Pancreas (tissue), 10 donors: ENCODE measurements at regions of chr11 and their contacts with region 1.

Region 1: DNA sequence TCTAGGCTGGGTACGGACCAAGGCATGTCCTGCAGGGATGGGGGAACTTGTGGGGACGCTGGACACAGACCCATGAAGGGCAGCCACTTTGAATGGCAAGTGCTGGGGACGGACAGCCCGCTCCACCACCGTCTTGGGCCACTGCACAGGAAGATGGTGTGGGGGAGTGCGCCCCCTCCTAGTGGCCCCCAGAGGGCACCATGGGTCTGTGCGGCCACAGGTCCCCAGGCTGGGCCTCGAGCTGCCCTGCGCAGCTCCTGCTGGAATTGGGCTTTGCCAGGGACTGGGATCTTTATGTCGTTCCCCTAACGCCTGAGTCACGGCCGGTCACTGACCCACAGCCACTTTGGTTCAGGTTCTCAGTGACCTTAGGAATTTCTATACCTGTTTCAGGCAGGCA is 44.4 kb downstream of the NAT10 start:
- DNase-seq: no peak
- ATAC-seq: peak in 2 of 4 donors; percentile 46 to 50
- H3K4me3 ChIP-seq: no peak overlapping the region
- H3K27ac ChIP-seq: no peak overlapping the region
- H3K4me1 ChIP-seq: no peaks in the 10 kb centered on the region
- H3K27me3 ChIP-seq: no peaks in the 10 kb centered on the region
- CTCF ChIP-seq: no peak

Region 2: DNA sequence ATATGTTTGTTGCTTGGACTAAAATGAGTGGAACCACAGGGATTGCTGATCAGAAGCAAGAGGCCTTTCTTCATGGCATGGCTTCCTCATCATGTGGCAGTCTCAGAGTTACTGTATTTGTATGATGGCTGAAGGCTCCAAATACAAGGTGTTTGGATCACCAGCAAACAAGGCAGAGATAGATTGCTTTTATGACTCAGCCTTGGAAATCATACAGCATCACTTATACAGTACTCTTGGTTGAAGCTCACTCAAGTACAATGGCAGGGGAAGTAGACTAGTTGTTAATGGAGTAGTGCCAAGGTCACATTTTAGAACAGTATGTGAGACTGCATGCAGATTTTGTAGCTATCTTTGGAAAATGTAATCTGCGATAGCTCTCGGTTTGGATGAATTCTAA is 81.7 kb before region 1 on chr11:
- intact Hi-C with region 1: no loop called
- DNase-seq: no peak
- ATAC-seq: peak; percentile 71 to 86 (median 78)
- H3K4me3 ChIP-seq: no peak overlapping the region
- H3K27ac ChIP-seq: peak overlapping the region in 1 of 4 donors; percentile 6
- H3K4me1 ChIP-seq: peaks cover 4 to 23% (median 12%) of the 10 kb centered on the region in 3 donors
- H3K27me3 ChIP-seq: no peaks in the 10 kb centered on the region
- CTCF ChIP-seq: no peak

Region 3: GRCh38 chr11:34492806-34493414 is 343.1 kb after region 1 on chr11:
- intact Hi-C with region 1: loop called in 1 of 3 experiments (anchors 10 kb)
- DNase-seq: peak in 5 of 6 donors; percentile 34 to 73 (median 54)
- ATAC-seq: peak; percentile 55 to 81 (median 80)
- H3K4me3 ChIP-seq: no peak overlapping the region
- H3K27ac ChIP-seq: no peak overlapping the region
- H3K4me1 ChIP-seq: no peaks in the 10 kb centered on the region
- H3K27me3 ChIP-seq: no peaks in the 10 kb centered on the region
- CTCF ChIP-seq: peak; percentile 17 to 60 (median 44)